Panc1 (cell line): ENCODE measurements at regions of chrX and their contacts with region 1.

Region 1: DNA sequence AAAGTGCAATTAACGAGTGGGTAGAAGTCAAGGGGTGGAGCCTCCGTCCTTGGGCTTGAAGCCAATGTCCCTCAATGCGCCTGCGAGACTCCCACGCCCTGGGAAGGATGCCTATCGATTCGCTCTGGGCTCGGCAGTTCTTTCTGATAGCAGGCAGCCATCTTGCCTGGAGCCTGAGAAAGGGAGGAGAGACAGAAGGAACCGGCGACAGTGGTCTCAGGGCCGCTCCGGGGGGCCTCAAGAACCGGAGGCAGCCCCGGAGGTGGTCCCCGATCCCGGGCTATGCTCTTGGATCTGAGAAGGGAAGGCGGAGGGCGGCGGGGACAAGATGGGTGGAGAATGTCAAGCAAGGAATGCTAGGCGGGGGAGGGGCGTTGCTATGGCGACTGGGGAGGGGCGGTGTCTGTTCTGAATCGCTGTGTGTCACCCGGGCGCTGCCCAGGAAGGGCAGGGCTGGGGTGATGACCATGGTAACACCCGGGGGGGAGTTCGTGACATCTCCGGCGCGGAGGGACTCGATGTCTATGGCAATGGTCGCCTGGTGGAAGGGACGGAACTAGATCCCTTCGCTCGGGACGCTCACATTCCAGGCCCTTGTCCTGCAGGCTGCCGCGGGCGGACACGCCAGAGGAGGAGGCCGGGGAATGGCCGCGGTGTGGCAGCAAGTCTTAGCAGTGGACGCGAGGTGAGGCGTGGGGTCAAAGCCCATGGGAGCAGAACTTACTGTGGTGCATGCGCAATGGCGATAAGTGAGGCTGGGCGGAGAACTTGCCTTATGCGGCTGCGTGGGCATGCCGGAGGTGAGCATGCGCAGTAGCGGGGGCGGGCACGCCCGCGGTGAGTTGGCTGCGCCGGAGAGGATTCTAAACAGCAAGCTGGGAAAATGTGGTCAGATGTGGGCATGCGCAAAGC is at the start of gene WDR13:
- DNase-seq: peak; percentile 85
- ATAC-seq: peak; percentile 95
- H3K4me3 ChIP-seq: peak within 1 kb of the TSS; percentile 57 to 69
- H3K27ac ChIP-seq: peak within 1 kb of the TSS; percentile 90
- H3K4me1 ChIP-seq: no peaks in the 10 kb centered on the region; the same call in 1 of the 2 replicates
- H3K27me3 ChIP-seq: no peaks in the 10 kb centered on the region
- CTCF ChIP-seq: no peak
- total RNA-seq, gene WDR13: 91.3 TPM

Region 2: DNA sequence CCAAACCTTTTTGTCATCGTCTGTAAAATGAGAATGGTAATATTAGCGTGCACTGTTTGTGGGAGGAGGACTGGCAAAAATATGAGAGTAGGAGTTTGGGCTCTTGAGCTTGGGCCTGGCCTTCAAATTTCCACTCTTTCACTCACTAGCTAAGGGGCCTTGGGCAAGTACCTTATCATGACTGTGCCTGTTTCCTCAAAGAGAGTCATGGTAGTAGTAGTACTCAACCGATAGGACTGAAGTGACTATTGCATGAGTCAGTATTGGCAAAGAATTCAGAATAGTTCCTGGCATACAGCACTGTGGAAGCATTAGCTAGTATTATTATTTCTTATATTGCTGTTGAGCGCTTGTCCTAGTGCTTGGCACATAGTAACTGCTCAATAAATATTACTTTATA is 39.3 kb before region 1 on chrX:
- CTCF ChIA-PET with region 1: interaction called, 10 read pairs
- POLR2A ChIA-PET with region 1: no interaction called
- in situ Hi-C with region 1: no loop called
- intact Hi-C with region 1: no loop called
- DNase-seq: no peak
- ATAC-seq: peak; percentile 91
- H3K4me3 ChIP-seq: no peak overlapping the region
- H3K27ac ChIP-seq: no peak overlapping the region
- H3K4me1 ChIP-seq: no peaks in the 10 kb centered on the region
- H3K27me3 ChIP-seq: no peaks in the 10 kb centered on the region
- CTCF ChIP-seq: no peak

Region 3: DNA sequence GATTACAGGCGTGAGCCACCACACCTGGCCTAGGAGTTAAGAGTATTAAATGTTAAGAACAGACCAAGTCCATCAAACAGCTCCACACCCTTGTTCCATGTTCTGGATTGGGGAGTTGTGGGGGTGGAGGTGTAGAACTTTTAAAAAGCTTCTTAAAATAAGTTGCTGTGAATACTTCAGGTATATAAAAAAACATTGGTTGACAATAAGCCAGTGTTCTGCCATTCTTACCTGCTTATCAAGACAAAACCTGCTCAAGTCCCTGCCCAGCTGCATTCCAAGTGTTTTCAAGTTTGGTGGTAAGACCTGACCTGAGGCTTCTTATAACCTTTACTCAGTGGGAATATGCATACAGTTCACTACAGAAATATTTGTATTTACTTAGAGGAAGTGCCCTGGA is 16.9 kb before region 1 on chrX:
- CTCF ChIA-PET with region 1: no interaction called
- POLR2A ChIA-PET with region 1: interaction called, 10 read pairs
- in situ Hi-C with region 1: no loop called
- intact Hi-C with region 1: no loop called
- DNase-seq: no peak
- ATAC-seq: peak; percentile 25; the same call in 1 of the 2 replicates
- H3K4me3 ChIP-seq: no peak overlapping the region
- H3K27ac ChIP-seq: no peak overlapping the region
- H3K4me1 ChIP-seq: peaks cover 11% of the 10 kb centered on the region
- H3K27me3 ChIP-seq: no peaks in the 10 kb centered on the region
- CTCF ChIP-seq: no peak